ENCODE measurements at regions of chr19 and their contacts with region 1.

Region 1: DNA sequence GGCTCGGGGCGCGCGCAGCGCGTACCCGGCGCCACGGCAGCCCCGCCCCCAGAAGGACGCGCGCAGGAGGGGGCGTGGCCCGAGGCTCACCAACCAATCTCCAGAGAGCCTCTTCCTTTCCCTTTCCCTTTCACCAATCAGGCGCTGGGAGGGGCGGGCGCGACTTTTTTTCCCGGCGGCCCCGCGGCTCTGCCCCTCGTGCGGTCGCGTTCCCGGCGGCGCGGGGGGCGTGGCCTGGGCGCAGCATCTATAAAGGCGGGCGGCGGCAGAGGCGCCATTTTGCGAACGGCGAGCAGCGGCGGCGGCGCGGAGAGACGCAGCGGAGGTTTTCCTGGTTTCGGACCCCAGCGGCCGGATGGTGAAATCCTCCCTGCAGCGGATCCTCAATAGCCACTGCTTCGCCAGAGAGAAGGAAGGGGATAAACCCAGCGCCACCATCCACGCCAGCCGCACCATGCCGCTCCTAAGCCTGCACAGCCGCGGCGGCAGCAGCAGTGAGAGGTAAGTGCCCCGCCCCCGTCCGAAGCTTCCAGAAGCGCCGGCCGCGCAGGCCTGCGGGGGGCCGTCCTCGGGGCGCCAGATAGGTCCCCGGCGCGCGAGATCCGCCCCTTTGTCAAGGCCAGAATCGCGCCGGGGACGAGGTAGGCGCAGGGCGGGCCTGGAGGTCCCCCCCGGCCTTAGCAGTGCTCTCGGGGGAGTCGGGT is 12.6 kb downstream of the PEAK3 start:
- DNase-seq: peak; percentile 97 to 99
- ATAC-seq: peak; percentile 76 to 93 (median 83)
- H3K4me3 ChIP-seq: peak overlapping the region; percentile 97
- H3K4me3 Mint-ChIP-seq: peak overlapping the region; percentile 90
- H3K27ac ChIP-seq: peak overlapping the region; percentile 89
- H3K27ac Mint-ChIP-seq: peak overlapping the region; percentile 87 to 97
- H3K4me1 ChIP-seq: peaks cover 54% of the 10 kb centered on the region
- H3K4me1 Mint-ChIP-seq: peaks cover 19 to 43% of the 10 kb centered on the region in 2 donors
- H3K27me3 ChIP-seq: no peaks in the 10 kb centered on the region
- H3K27me3 Mint-ChIP-seq: no peaks in the 10 kb centered on the region
- CTCF ChIP-seq: no peak

Region 2: GRCh38 chr19:2157452-2157851 is 111.9 kb before region 1 on chr19:
- intact Hi-C with region 1: loop called (anchors 2 kb)
- DNase-seq: no peak
- ATAC-seq: no peak
- H3K4me3 ChIP-seq: no peak overlapping the region
- H3K4me3 Mint-ChIP-seq: no peak overlapping the region
- H3K27ac ChIP-seq: no peak overlapping the region
- H3K27ac Mint-ChIP-seq: no peak overlapping the region
- H3K4me1 ChIP-seq: no peaks in the 10 kb centered on the region
- H3K4me1 Mint-ChIP-seq: peaks cover 5 to 9% of the 10 kb centered on the region in 2 donors
- H3K27me3 ChIP-seq: no peaks in the 10 kb centered on the region
- H3K27me3 Mint-ChIP-seq: no peaks in the 10 kb centered on the region
- CTCF ChIP-seq: no peak

Region 3: GRCh38 chr19:2328401-2329148 is 59.2 kb after region 1 on chr19 and contains the starts of genes LSM7 and SPPL2B:
- intact Hi-C with region 1: loop called (anchors 10 kb)
- DNase-seq: peak; percentile 95 to 98
- ATAC-seq: peak; percentile 87 to 90 (median 89)
- H3K4me3 ChIP-seq: peak within 1 kb of the TSS; percentile 93
- H3K4me3 Mint-ChIP-seq: peak within 1 kb of the TSS; percentile 99
- H3K27ac ChIP-seq: peak within 1 kb of the TSS; percentile 78
- H3K27ac Mint-ChIP-seq: peak within 1 kb of the TSS; percentile 91 to 98
- H3K4me1 ChIP-seq: peaks cover 73% of the 10 kb centered on the region
- H3K4me1 Mint-ChIP-seq: peaks cover 25 to 57% of the 10 kb centered on the region in 2 donors
- H3K27me3 ChIP-seq: no peaks in the 10 kb centered on the region
- H3K27me3 Mint-ChIP-seq: no peaks in the 10 kb centered on the region
- CTCF ChIP-seq: no peak
- total RNA-seq, gene LSM7: 52.0 to 80.2 (median 77.4) TPM
- total RNA-seq, gene SPPL2B: 63.2 to 83.8 (median 79.7) TPM

Measured in natural killer cell (primary cell).